ENCODE measurements at regions of chr13 and their contacts with region 1.

Region 1: GRCh38 chr13:110455941-110456340 is 105.6 kb downstream of the RAB20 start:
- DNase-seq: peak; percentile 20
- H3K4me3 ChIP-seq: no peak overlapping the region
- H3K27ac ChIP-seq: peak overlapping the region; percentile 11
- H3K27me3 ChIP-seq: no peaks in the 10 kb centered on the region
- CTCF ChIP-seq: peak; percentile 74

Region 2: DNA sequence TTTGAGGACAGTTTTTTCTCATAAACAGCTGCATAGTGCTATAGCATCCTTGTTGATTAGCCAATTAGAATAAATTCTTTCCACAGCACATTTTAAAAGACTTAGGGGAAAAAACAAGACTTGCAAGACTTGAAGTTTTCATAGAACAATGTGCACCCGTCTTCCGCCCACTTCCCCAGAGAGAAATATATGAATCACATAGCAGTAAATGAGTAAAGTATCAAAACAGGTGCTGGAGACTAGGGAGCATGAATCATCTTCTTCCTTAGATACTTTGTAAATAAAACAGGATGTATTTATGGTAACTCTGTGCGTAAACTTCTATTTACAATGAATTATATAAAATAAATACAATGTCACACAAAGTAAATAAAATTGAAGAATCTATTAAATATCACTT is 73.7 kb before region 1 on chr13:
- CTCF ChIA-PET with region 1: no interaction called
- POLR2A ChIA-PET with region 1: no interaction called
- DNase-seq: no peak
- H3K4me3 ChIP-seq: no peak overlapping the region
- H3K27ac ChIP-seq: no peak overlapping the region
- H3K27me3 ChIP-seq: no peaks in the 10 kb centered on the region
- CTCF ChIP-seq: no peak

Region 3: DNA sequence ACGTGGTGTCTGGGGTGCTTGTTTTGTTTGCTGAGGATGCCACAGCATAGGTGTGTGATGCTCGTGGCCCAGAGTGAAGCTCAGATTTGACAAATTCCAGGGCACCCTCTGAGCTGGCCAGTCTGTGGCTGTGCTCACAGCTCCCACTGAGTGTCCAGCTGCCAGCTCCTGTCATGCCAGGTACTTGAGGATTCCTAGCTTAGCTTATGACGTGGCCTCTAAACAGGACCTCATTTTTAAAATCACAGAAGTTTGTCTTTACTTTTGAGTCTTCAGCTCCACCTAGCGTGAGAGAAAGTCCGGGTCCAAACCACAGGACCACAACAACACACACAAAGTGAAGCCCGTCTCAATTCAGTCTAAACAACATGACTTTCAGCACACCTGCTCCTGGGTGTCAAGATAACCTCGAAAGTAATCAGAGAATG is 11.7 kb before region 1 on chr13:
- CTCF ChIA-PET with region 1: interaction called, 13 read pairs
- POLR2A ChIA-PET with region 1: no interaction called
- DNase-seq: no peak
- H3K4me3 ChIP-seq: no peak overlapping the region
- H3K27ac ChIP-seq: no peak overlapping the region
- H3K27me3 ChIP-seq: no peaks in the 10 kb centered on the region
- CTCF ChIP-seq: no peak

Region 4: DNA sequence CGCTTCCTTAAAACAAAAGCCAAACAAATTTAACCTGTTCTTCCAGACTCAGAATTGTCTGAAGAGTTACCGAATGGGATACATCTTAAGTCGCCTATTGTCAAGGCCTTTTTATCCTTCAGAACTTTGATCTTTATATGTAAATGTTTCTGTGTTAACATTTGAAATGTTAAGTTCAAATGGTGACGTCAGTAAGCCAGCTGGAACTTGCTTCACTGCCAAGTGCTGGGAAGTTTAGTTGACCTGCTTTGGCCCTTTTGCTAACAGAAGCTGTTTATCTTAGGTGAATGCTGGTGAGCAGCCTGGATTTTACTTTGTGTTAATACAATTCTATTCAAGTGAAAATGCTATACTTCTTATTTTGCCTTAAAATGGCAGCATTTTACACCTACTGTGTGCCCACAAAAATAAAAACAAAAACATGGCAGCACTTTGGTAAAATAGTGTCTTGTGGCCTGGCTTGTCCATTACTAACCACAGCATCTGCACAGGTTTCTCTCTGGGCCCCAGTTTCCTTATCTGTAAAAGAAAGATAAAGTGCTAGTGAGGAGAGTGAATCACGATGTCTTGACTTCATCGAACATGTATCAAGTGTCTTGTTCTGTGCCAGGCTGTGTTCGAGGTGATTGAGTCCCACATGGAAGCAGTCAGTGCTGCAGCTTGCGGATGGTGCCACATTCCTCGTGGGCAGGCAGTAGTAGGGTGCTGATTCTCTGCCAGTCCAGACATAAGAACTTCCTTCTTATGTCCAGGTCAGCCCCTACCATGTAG is 161.5 kb after region 1 on chr13:
- CTCF ChIA-PET with region 1: interaction called, 19 read pairs
- POLR2A ChIA-PET with region 1: no interaction called
- DNase-seq: peak; percentile 79
- H3K4me3 ChIP-seq: peak overlapping the region; percentile 81
- H3K27ac ChIP-seq: peak overlapping the region; percentile 83
- H3K27me3 ChIP-seq: no peaks in the 10 kb centered on the region
- CTCF ChIP-seq: no peak

Measured in AG04450 (cell line).